ENCODE measurements at regions of chr11 and their contacts with region 1.

Region 1: DNA sequence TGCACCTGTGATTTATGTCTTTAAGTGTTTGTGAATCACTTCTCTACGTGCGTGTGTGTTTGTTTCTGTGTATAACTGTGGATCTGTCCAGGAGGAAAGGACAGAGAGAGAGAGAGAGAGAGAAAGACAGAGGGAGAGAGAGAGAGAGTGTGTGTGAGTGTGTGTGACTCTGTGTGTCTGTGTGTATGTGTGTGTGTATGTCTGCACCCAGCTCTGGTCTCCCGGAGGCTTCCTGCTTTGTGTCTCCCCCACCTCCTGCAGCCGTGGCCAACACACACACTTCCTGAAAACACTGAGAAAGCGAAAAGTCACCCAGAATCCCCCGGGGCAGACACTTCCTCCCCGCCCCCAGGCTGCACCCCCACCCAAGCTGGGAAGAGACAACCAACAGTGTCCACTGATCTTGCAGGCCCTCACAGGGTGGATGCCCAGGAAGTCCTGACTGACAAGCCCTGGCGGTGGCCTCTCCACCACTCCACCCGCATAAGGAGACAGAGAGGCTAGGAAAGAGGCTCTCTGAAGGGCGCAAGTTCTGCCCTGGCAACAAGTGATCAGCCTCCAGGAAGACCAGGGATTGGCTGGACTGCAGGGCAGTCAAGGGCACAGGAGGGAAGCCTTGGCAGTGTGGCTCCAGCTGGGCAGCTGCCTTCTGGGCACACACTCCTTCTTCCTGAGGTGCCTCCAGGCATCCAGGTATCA is 30.0 kb downstream of the ARAP1 start:
- DNase-seq: peak; percentile 80 to 92
- H3K4me3 ChIP-seq: peak overlapping the region; percentile 68 to 76
- H3K27ac ChIP-seq: peak overlapping the region; percentile 40 to 90
- H3K4me1 ChIP-seq: peaks cover 13 to 32% of the 10 kb centered on the region in 2 donors
- H3K27me3 ChIP-seq: no peaks in the 10 kb centered on the region
- CTCF ChIP-seq: peak in 1 of 3 experiments; percentile 13

Region 2: GRCh38 chr11:72305891-72306585 is 416.2 kb before region 1 on chr11:
- intact Hi-C with region 1: no loop called
- DNase-seq: no peak
- H3K4me3 ChIP-seq: no peak overlapping the region
- H3K27ac ChIP-seq: no peak overlapping the region
- H3K4me1 ChIP-seq: no peaks in the 10 kb centered on the region
- H3K27me3 ChIP-seq: no peaks in the 10 kb centered on the region
- CTCF ChIP-seq: no peak

Region 3: GRCh38 chr11:72781313-72782050 is 59.3 kb after region 1 on chr11:
- intact Hi-C with region 1: loop called (anchors 5 kb)
- DNase-seq: no peak
- H3K4me3 ChIP-seq: peak overlapping the region; percentile 66 to 94
- H3K27ac ChIP-seq: no peak overlapping the region
- H3K4me1 ChIP-seq: peaks cover 8 to 27% of the 10 kb centered on the region in 2 donors
- H3K27me3 ChIP-seq: no peaks in the 10 kb centered on the region
- CTCF ChIP-seq: no peak

Region 4: DNA sequence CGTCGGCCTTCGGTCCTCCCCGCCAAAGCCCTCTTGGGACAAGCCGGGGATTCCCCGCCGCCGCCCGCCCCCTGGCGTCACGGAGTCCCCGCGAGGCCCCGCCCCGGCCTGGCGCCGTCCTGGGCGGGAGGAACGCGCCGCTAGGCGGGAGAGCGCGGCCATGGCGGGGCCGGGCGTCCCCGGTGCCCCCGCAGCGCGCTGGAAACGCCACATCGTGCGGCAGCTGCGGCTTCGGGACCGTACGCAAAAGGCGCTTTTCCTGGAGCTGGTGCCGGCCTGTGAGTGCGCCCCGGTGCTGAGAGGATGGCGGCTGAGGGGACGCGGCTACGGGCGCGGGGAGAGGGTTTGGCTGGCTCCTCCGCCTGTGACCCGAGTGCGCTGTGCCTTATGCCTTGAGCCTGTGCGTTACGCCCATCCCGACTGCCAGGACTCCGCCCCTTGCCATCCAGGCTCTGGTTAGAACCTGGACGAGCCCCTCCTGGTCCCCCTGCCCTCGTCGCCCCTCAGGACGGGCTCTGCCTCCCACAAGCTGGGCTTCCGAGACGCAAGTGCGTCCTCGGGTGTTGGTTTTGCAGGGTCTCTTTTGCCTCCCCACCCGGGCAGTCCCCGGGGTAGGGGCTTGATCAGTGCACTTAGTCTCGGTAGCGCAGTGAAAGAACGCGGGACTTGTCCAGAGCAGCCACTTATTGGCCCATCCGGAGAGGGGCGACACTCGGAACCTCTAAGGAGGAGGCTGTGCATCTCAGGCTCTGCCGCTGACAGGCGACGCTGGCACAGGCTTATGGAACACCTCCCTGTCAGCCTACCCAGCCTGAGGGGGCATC is 92.3 kb after region 1 on chr11 and contains the start of gene ATG16L2:
- intact Hi-C with region 1: loop called (anchors 1 kb)
- DNase-seq: peak in 1 of 2 donors; percentile 85
- H3K4me3 ChIP-seq: peak within 1 kb of the TSS; percentile 81 to 85
- H3K27ac ChIP-seq: peak within 1 kb of the TSS; percentile 92 to 96
- H3K4me1 ChIP-seq: peaks cover 10 to 29% of the 10 kb centered on the region in 2 donors
- H3K27me3 ChIP-seq: no peaks in the 10 kb centered on the region
- CTCF ChIP-seq: peak; percentile 7 to 61 (median 22)
- total RNA-seq, gene ATG16L2: 21.2 TPM

Region 5: GRCh38 chr11:73177778-73178577 is 455.8 kb after region 1 on chr11:
- intact Hi-C with region 1: loop called (anchors 2 kb)
- DNase-seq: peak; percentile 66 to 94
- H3K4me3 ChIP-seq: peak overlapping the region in 1 of 2 donors; percentile 15
- H3K27ac ChIP-seq: peak overlapping the region; percentile 91 to 94
- H3K4me1 ChIP-seq: peaks cover 16 to 36% of the 10 kb centered on the region in 2 donors
- H3K27me3 ChIP-seq: no peaks in the 10 kb centered on the region
- CTCF ChIP-seq: peak; percentile 78 to 94 (median 93)

Region 6: DNA sequence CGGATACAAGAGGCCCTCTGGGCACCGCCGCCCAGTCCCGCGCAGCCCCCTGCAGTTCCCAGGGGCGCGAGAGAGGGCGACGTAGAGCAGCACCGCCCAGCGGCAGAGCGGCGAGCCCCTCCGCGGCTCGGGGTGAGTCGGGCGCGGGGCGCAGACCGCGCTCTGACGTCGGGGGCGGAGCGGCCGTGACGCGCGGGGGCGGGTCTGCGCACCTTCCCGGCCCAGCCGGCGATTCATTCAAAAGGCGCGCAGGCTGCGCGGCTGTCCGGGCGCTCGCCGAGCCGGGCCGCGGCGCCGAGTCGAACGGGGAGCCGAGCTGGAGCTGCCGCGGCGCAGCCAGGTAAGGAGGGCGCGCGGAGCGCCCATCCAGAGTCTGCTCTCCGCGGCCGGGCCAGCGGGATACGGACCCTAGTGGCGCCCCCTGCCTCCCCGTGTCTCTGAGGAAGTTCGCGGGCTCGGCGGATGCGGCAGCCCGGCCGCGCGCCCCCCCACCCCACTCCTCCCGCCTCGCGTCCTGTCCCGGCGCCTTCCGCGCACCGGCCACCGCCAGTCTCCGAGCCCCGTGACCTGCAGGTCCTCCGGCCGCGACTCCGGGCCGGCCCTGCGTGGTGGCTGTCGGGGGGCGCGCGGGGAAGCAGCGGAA is 654.1 kb after region 1 on chr11 and contains the start of gene RELT:
- intact Hi-C with region 1: loop called (anchors 10 kb)
- DNase-seq: peak; percentile 50 to 93
- H3K4me3 ChIP-seq: peak within 1 kb of the TSS; percentile 73 to 79
- H3K27ac ChIP-seq: peak within 1 kb of the TSS; percentile 88 to 92
- H3K4me1 ChIP-seq: peaks cover 0 to 8% of the 10 kb centered on the region in 2 donors
- H3K27me3 ChIP-seq: no peaks in the 10 kb centered on the region
- CTCF ChIP-seq: peak; percentile 86 to 94 (median 89)
- total RNA-seq, gene RELT: 25.7 TPM

Measured in ascending aorta (tissue), 2 donors.